A549 (cell line): ENCODE measurements at regions of chr10 and their contacts with region 1.

Region 1: GRCh38 chr10:30687698-30688219 is 58.2 kb upstream of the LYZL2 start:
- DNase-seq: peak; percentile 79 to 83
- ATAC-seq: peak; percentile 95 to 98
- H3K4me3 ChIP-seq: no peak overlapping the region
- H3K27ac ChIP-seq: no peak overlapping the region; a peak in 1 of 6 replicates
- H3K4me1 ChIP-seq: peaks cover 9% of the 10 kb centered on the region
- CTCF ChIP-seq: peak; percentile 88
- EP300 ChIP-seq: no peak
- POLR2A ChIP-seq: no peak
- RAD21 ChIP-seq: peak; percentile 85 to 86

Region 2: DNA sequence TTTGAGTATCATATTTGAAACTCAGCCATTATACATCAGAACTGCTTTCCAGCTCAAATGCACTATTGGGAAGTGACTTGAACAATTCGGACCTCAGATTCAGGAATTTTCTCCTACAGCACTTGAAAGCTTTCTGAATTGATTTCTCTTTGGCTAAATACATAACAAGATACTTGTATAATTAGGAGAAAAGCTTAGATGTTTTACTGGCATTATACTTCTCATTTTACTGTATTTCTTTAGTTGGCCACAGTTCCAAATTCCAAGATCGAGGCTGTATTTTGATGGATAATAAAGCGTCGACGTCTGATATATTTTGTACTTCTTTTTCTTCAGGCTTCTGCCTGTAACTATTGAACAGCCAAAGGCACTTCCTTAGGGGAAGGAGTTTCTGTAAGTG is 31.5 kb before region 1 on chr10:
- CTCF ChIA-PET with region 1: no interaction called
- POLR2A ChIA-PET with region 1: no interaction called
- DNase-seq: no peak
- ATAC-seq: no peak
- H3K4me3 ChIP-seq: no peak overlapping the region
- H3K27ac ChIP-seq: no peak overlapping the region
- H3K4me1 ChIP-seq: no peaks in the 10 kb centered on the region
- CTCF ChIP-seq: no peak
- EP300 ChIP-seq: no peak
- POLR2A ChIP-seq: no peak
- RAD21 ChIP-seq: no peak

Region 3: GRCh38 chr10:30671026-30671616 is 16.6 kb before region 1 on chr10:
- CTCF ChIA-PET with region 1: interaction called, 20 read pairs
- POLR2A ChIA-PET with region 1: no interaction called
- DNase-seq: peak; percentile 33 to 84
- ATAC-seq: peak; percentile 81 to 93
- H3K4me3 ChIP-seq: no peak overlapping the region
- H3K27ac ChIP-seq: 0 out of 6 replicates have a peak overlapping the region, but pooled peaks of 1 of the 2 experiments have one; percentile 1
- H3K4me1 ChIP-seq: 0 out of 3 replicates have a peak, but pooled peaks cover 5% of the 10 kb centered on the region
- CTCF ChIP-seq: peak; percentile 87
- EP300 ChIP-seq: no peak
- POLR2A ChIP-seq: no peak
- RAD21 ChIP-seq: peak; percentile 69 to 77

Region 4: GRCh38 chr10:30701451-30702173 is 13.9 kb after region 1 on chr10:
- CTCF ChIA-PET with region 1: interaction called, 32 read pairs
- POLR2A ChIA-PET with region 1: no interaction called
- DNase-seq: peak in 1 of 2 experiments; percentile 57
- ATAC-seq: peak; percentile 62 to 71; a peak in 5 of 6 replicates
- H3K4me3 ChIP-seq: no peak overlapping the region
- H3K27ac ChIP-seq: peak overlapping the region; percentile 6 to 65; a peak in 4 of 6 replicates
- H3K4me1 ChIP-seq: peaks cover 18% of the 10 kb centered on the region
- CTCF ChIP-seq: no peak
- EP300 ChIP-seq: peak in 1 of 2 experiments; percentile 38; a peak in 1 of 5 replicates
- POLR2A ChIP-seq: no peak
- RAD21 ChIP-seq: no peak

Region 5: GRCh38 chr10:30722956-30723620 is 35.3 kb after region 1 on chr10:
- CTCF ChIA-PET with region 1: interaction called, 15 read pairs
- POLR2A ChIA-PET with region 1: no interaction called
- DNase-seq: no peak
- ATAC-seq: no peak
- H3K4me3 ChIP-seq: no peak overlapping the region
- H3K27ac ChIP-seq: no peak overlapping the region
- H3K4me1 ChIP-seq: no peaks in the 10 kb centered on the region
- CTCF ChIP-seq: no peak
- EP300 ChIP-seq: no peak
- POLR2A ChIP-seq: no peak
- RAD21 ChIP-seq: no peak

Region 6: DNA sequence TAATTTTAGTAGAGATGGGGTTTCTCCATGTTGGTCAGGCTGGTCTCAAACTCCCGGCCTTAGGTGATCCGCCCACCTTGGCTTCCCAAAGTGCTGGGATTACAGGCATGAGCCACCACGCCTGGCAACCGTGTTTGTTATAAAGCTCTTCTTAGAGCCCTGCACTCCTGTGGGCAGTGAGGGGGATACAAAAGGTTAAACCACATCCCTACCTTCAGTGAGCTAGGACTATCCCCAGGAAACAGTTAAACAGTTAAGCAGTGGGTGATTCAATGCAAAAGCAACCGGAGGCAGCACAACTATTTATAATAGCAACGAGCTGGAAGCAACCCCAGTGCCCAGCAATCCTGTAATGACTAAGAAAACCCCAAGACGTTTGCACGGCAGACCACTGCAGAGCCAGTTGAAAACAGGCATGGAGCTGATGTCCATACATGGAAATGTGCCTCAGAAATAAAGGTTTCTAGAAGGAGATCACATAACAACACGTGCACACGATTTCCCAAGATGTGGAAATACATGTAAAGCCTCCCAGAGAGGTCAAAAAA is 49.0 kb after region 1 on chr10:
- CTCF ChIA-PET with region 1: interaction called, 10 read pairs
- POLR2A ChIA-PET with region 1: no interaction called
- DNase-seq: peak; percentile 64 to 90
- ATAC-seq: peak; percentile 95
- H3K4me3 ChIP-seq: no peak overlapping the region
- H3K27ac ChIP-seq: peak overlapping the region; percentile 31 to 78
- H3K4me1 ChIP-seq: peaks cover 14% of the 10 kb centered on the region
- CTCF ChIP-seq: no peak
- EP300 ChIP-seq: peak in 1 of 2 experiments; percentile 46; a peak in 1 of 5 replicates
- POLR2A ChIP-seq: no peak
- RAD21 ChIP-seq: no peak